CD8-positive, alpha-beta T cell (primary cell): ENCODE measurements at regions of chr3 and their contacts with region 1.

Region 1: DNA sequence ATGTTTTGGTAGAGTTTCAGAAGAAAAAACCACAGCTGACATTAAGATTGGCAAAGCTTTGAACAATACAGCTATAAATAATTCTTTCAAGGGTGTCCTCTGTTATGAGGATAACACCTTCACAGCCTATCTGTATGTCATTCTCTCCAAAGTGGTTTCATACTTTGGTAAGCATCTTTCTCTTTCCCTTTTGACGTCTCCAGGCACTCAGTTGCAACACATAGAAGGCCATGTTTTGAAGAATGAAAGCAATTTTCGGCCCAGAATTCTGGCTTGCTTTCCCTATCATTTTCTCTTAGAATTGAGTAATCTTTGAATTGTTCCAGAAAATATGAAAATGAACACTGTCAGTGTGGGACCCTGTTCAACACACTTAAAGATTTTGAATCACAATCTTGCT is 200.0 kb upstream of the CBLB start:
- DNase-seq: peak in 2 of 9 experiments; percentile 56 to 76
- ATAC-seq: peak; percentile 85
- H3K4me3 ChIP-seq: no peak overlapping the region
- H3K4me3 Mint-ChIP-seq: peak overlapping the region; percentile 16
- H3K27ac ChIP-seq: peak overlapping the region in 1 of 2 experiments; percentile 66
- H3K27ac Mint-ChIP-seq: peak overlapping the region; percentile 47
- H3K4me1 ChIP-seq: peaks cover 5% of the 10 kb centered on the region
- H3K4me1 Mint-ChIP-seq: peaks cover 9% of the 10 kb centered on the region
- H3K27me3 ChIP-seq: no peaks in the 10 kb centered on the region
- H3K27me3 Mint-ChIP-seq: no peaks in the 10 kb centered on the region
- CTCF ChIP-seq: no peak

Region 2: DNA sequence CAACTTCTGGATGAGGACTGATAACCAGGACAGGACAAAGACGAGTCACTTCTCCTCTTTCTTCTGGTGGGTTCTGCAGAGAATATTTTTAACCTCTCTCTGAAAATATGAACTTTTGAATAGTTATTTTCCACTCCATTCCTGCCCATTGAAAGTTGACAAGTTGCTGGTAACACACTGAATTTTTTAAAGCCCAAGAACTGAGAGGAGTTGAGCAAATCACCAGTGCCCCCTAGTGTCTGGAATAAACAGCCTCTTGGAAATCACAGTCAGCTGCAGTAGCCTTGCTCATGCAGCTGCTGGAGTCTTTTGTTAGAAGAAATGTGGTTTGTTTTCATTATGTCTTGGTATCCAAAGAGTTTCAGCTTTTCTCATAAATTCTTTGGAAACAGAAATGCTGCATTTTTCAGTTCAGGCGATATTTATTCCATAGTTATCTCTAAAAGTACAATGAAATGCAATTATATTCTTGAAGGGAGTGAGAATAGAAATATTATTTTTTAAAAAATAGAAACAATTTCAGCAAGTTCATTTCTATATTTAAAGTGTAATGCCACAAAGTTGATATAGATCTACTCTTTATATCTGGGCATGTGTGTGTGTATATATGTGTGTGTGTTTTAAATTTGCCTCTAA is 541.0 kb after region 1 on chr3:
- CTCF ChIA-PET with region 1: no interaction called
- POLR2A ChIA-PET with region 1: no interaction called
- intact Hi-C with region 1: loop called in 1 of 2 experiments (anchors 10 kb)
- DNase-seq: peak; percentile 37 to 81 (median 56)
- ATAC-seq: peak; percentile 76
- H3K4me3 ChIP-seq: no peak overlapping the region
- H3K4me3 Mint-ChIP-seq: no peak overlapping the region
- H3K27ac ChIP-seq: no peak overlapping the region
- H3K27ac Mint-ChIP-seq: no peak overlapping the region
- H3K4me1 ChIP-seq: no peaks in the 10 kb centered on the region
- H3K4me1 Mint-ChIP-seq: peaks cover 4% of the 10 kb centered on the region
- H3K27me3 ChIP-seq: no peaks in the 10 kb centered on the region
- H3K27me3 Mint-ChIP-seq: no peaks in the 10 kb centered on the region
- CTCF ChIP-seq: peak; percentile 88